ENCODE measurements at regions of chr9 and their contacts with region 1.

Region 1: GRCh38 chr9:5671711-5672353 is 42.9 kb downstream of the RIC1 start:
- DNase-seq: peak in 4 of 9 experiments; percentile 11 to 66 (median 34)
- ATAC-seq: peak; percentile 85
- H3K4me3 ChIP-seq: no peak overlapping the region
- H3K4me3 Mint-ChIP-seq: peak overlapping the region; percentile 27
- H3K27ac ChIP-seq: no peak overlapping the region
- H3K27ac Mint-ChIP-seq: peak overlapping the region; percentile 50
- H3K4me1 ChIP-seq: peaks cover 19% of the 10 kb centered on the region
- H3K4me1 Mint-ChIP-seq: peaks cover 54% of the 10 kb centered on the region
- H3K27me3 ChIP-seq: no peaks in the 10 kb centered on the region
- H3K27me3 Mint-ChIP-seq: no peaks in the 10 kb centered on the region
- CTCF ChIP-seq: no peak

Region 2: GRCh38 chr9:5652821-5653220 is 19.0 kb before region 1 on chr9:
- CTCF ChIA-PET with region 1: no interaction called
- POLR2A ChIA-PET with region 1: no interaction called
- intact Hi-C with region 1: loop called in 1 of 2 experiments (anchors 2 kb)
- DNase-seq: no peak
- ATAC-seq: no peak
- H3K4me3 ChIP-seq: no peak overlapping the region
- H3K4me3 Mint-ChIP-seq: no peak overlapping the region
- H3K27ac ChIP-seq: no peak overlapping the region
- H3K27ac Mint-ChIP-seq: no peak overlapping the region
- H3K4me1 ChIP-seq: no peaks in the 10 kb centered on the region
- H3K4me1 Mint-ChIP-seq: peaks cover 27% of the 10 kb centered on the region
- H3K27me3 ChIP-seq: no peaks in the 10 kb centered on the region
- H3K27me3 Mint-ChIP-seq: no peaks in the 10 kb centered on the region
- CTCF ChIP-seq: no peak

Region 3: DNA sequence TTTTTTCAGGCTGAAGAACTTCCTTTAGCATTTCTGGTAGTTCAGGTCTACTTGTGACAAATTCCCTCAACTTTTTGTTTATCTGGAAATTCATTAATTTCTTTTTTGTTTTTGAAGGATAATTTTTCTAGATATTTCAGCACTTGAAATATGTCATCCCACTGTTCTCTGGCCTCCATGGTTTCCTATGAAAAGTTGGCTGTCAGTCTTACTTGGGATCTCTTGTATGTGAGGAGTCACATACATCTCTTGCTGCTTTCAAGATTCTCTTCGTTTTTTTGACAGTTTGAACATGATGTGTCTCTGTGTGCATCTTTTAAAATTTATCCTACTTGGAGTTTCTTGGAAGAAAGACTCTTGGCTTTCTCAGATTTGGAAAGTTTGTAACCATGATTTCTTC is 36.6 kb after region 1 on chr9:
- CTCF ChIA-PET with region 1: no interaction called
- POLR2A ChIA-PET with region 1: no interaction called
- intact Hi-C with region 1: loop called in 1 of 2 experiments (anchors 5 kb)
- DNase-seq: no peak
- ATAC-seq: no peak
- H3K4me3 ChIP-seq: no peak overlapping the region
- H3K4me3 Mint-ChIP-seq: no peak overlapping the region
- H3K27ac ChIP-seq: no peak overlapping the region
- H3K27ac Mint-ChIP-seq: no peak overlapping the region
- H3K4me1 ChIP-seq: no peaks in the 10 kb centered on the region
- H3K4me1 Mint-ChIP-seq: no peaks in the 10 kb centered on the region
- H3K27me3 ChIP-seq: no peaks in the 10 kb centered on the region
- H3K27me3 Mint-ChIP-seq: no peaks in the 10 kb centered on the region
- CTCF ChIP-seq: no peak

Region 4: DNA sequence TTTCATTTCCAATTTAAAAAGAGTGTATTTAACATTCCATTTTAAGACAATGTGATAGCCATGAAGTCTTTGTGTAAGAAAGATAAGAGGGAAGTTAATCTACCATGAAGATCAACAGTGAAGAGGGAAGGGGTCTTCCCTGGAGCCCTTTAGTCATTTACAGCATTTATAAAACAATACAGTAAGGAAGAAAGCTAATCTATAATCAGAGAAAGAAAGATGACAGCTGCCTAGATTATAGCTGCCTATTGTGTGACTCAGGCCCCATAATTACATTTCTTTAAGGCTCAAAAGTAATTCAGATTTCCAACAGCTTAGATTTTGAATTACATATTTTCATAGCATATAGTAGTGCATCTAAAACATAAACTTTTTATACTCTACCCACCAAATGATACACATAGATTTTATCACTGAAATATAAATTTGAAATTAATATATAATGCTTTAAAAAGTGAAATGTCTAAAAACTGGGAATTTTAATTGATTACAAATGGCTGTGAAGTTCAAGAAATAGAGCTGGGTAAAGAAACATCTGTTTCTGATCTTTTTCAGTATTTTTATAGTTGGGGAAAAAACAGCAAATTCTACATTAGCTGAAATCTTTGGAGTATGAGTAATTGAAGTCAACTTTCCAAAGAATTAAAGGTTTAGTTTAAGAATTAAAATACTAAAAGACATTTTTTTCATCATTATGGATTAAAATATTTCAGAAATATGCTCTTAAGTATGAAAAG is 46.6 kb after region 1 on chr9:
- CTCF ChIA-PET with region 1: no interaction called
- POLR2A ChIA-PET with region 1: no interaction called
- intact Hi-C with region 1: no loop called
- DNase-seq: no peak
- ATAC-seq: no peak
- H3K4me3 ChIP-seq: no peak overlapping the region
- H3K4me3 Mint-ChIP-seq: no peak overlapping the region
- H3K27ac ChIP-seq: no peak overlapping the region
- H3K27ac Mint-ChIP-seq: no peak overlapping the region
- H3K4me1 ChIP-seq: no peaks in the 10 kb centered on the region
- H3K4me1 Mint-ChIP-seq: peaks cover 6% of the 10 kb centered on the region
- H3K27me3 ChIP-seq: no peaks in the 10 kb centered on the region
- H3K27me3 Mint-ChIP-seq: no peaks in the 10 kb centered on the region
- CTCF ChIP-seq: no peak

Region 5: DNA sequence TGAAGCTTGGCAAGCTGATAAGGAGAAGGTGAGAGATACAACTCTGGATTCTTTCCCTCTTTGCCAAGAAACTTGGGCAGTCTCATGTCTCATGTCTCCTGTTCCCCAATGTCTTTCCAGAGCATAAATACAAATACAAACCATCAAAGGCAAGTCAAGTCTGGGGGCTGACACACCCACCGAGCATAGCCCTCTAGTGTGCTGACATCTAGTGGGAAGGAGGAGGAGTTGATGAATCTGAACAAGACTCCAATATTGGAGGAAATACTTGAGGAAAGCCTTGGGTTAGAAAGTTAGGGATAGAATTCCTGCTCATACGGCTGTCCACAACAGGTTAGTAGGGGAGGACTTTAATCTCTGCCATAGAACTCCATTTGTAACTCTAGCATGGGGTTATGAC is 227.5 kb after region 1 on chr9:
- CTCF ChIA-PET with region 1: no interaction called
- POLR2A ChIA-PET with region 1: no interaction called
- intact Hi-C with region 1: no loop called
- DNase-seq: peak in 2 of 9 experiments; percentile 22 to 32
- ATAC-seq: no peak
- H3K4me3 ChIP-seq: no peak overlapping the region
- H3K4me3 Mint-ChIP-seq: no peak overlapping the region
- H3K27ac ChIP-seq: no peak overlapping the region
- H3K27ac Mint-ChIP-seq: no peak overlapping the region
- H3K4me1 ChIP-seq: no peaks in the 10 kb centered on the region
- H3K4me1 Mint-ChIP-seq: no peaks in the 10 kb centered on the region
- H3K27me3 ChIP-seq: no peaks in the 10 kb centered on the region
- H3K27me3 Mint-ChIP-seq: no peaks in the 10 kb centered on the region
- CTCF ChIP-seq: no peak

Measured in CD8-positive, alpha-beta T cell (primary cell).